Naive thymus-derived CD4-positive, alpha-beta T cell (primary cell): ENCODE measurements at regions of chr16 and their contacts with region 1.

Region 1: DNA sequence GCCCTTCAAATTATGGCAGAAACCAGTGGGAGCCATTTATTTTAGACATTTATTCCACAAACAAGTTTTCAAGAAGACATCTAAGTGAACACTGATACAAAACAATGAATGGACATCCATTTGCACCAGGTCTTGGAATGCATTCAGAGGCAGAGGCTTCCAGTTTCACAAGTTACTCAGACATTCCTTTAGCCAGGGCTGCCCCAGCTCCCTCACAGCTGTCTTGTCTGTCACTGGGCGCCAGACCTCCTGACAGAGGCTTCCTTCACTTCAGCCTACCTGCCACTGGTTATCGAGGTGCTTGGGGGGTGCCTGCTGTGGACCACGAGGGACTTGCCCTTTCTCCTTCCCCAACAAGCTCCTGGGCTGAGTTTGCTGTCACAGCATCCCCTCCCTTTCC is 19.2 kb downstream of the AQP8 start:
- DNase-seq: no peak
- ATAC-seq: no peak
- H3K4me3 ChIP-seq: no peak overlapping the region
- H3K4me3 Mint-ChIP-seq: no peak overlapping the region
- H3K27ac ChIP-seq: no peak overlapping the region
- H3K27ac Mint-ChIP-seq: no peak overlapping the region
- H3K4me1 ChIP-seq: no peaks in the 10 kb centered on the region
- H3K4me1 Mint-ChIP-seq: peaks cover 0 to 5% (median 0%) of the 10 kb centered on the region in 7 donors
- H3K27me3 ChIP-seq: no peaks in the 10 kb centered on the region
- H3K27me3 Mint-ChIP-seq: no peaks in the 10 kb centered on the region

Region 2: GRCh38 chr16:23826528-23827045 is 1409.4 kb before region 1 on chr16:
- CTCF ChIA-PET with region 1: no interaction called
- POLR2A ChIA-PET with region 1: no interaction called
- intact Hi-C with region 1: no loop called
- DNase-seq: peak in 7 of 9 donors; percentile 48 to 76 (median 62)
- ATAC-seq: peak; percentile 94
- H3K4me3 ChIP-seq: peak overlapping the region; percentile 8
- H3K4me3 Mint-ChIP-seq: peak overlapping the region; percentile 35 to 87 (median 69)
- H3K27ac ChIP-seq: peak overlapping the region; percentile 31
- H3K27ac Mint-ChIP-seq: peak overlapping the region; percentile 54 to 94 (median 88)
- H3K4me1 ChIP-seq: peaks cover 22 to 23% of the 10 kb centered on the region in 2 donors
- H3K4me1 Mint-ChIP-seq: peaks cover 31 to 44% (median 35%) of the 10 kb centered on the region in 7 donors
- H3K27me3 ChIP-seq: no peaks in the 10 kb centered on the region
- H3K27me3 Mint-ChIP-seq: peaks cover 0 to 3% (median 0%) of the 10 kb centered on the region in 5 donors

Region 3: GRCh38 chr16:25257504-25257955 is 21.5 kb after region 1 on chr16 and contains the start of gene ZKSCAN2:
- CTCF ChIA-PET with region 1: no interaction called
- POLR2A ChIA-PET with region 1: interaction called, 3 read pairs
- intact Hi-C with region 1: loop called (anchors 1 kb)
- DNase-seq: peak; percentile 66 to 90 (median 76)
- ATAC-seq: peak; percentile 89
- H3K4me3 ChIP-seq: peak within 1 kb of the TSS; percentile 90
- H3K4me3 Mint-ChIP-seq: peak within 1 kb of the TSS; percentile 90 to 98 (median 96)
- H3K27ac ChIP-seq: peak within 1 kb of the TSS; percentile 93
- H3K27ac Mint-ChIP-seq: peak within 1 kb of the TSS; percentile 95 to 98 (median 96)
- H3K4me1 ChIP-seq: peaks cover 16 to 39% of the 10 kb centered on the region in 2 donors
- H3K4me1 Mint-ChIP-seq: peaks cover 48 to 74% (median 66%) of the 10 kb centered on the region in 7 donors
- H3K27me3 ChIP-seq: no peaks in the 10 kb centered on the region
- H3K27me3 Mint-ChIP-seq: no peaks in the 10 kb centered on the region
- total RNA-seq, gene ZKSCAN2: 4.7 to 7.0 (median 5.2) TPM

Region 4: DNA sequence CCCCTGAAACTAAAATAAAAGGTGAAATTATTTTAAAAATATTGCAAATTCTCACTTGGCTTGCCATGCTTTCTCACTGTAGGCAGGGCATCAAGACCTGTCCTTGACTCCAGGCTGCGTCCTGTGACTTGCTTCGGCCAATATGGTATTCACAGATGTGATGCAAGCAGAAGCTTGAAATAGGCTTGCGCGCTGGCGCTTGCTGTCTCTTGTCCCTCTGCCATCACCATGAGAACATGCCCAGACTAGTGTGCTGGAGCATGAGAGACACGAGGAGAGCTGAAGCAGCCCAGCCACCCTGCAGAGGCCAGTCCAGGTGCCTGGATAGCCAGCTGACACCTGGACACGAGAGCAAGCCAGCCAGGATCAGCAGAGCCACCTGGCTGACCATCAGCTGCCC is 43.5 kb after region 1 on chr16:
- CTCF ChIA-PET with region 1: interaction called, 3 read pairs
- POLR2A ChIA-PET with region 1: no interaction called
- intact Hi-C with region 1: loop called in 1 of 2 experiments (anchors 1 kb)
- DNase-seq: no peak
- ATAC-seq: no peak
- H3K4me3 ChIP-seq: no peak overlapping the region
- H3K4me3 Mint-ChIP-seq: no peak overlapping the region
- H3K27ac ChIP-seq: no peak overlapping the region
- H3K27ac Mint-ChIP-seq: no peak overlapping the region
- H3K4me1 ChIP-seq: no peaks in the 10 kb centered on the region
- H3K4me1 Mint-ChIP-seq: peaks cover 0 to 9% (median 3%) of the 10 kb centered on the region in 7 donors
- H3K27me3 ChIP-seq: no peaks in the 10 kb centered on the region
- H3K27me3 Mint-ChIP-seq: peaks cover 0 to 8% (median 0%) of the 10 kb centered on the region in 5 donors

Region 5: GRCh38 chr16:25707982-25708583 is 472.1 kb after region 1 on chr16:
- CTCF ChIA-PET with region 1: no interaction called
- POLR2A ChIA-PET with region 1: no interaction called
- intact Hi-C with region 1: loop called in 1 of 2 experiments (anchors 5 kb)
- DNase-seq: no peak
- ATAC-seq: no peak
- H3K4me3 ChIP-seq: no peak overlapping the region
- H3K4me3 Mint-ChIP-seq: no peak overlapping the region
- H3K27ac ChIP-seq: no peak overlapping the region
- H3K27ac Mint-ChIP-seq: no peak overlapping the region
- H3K4me1 ChIP-seq: no peaks in the 10 kb centered on the region
- H3K4me1 Mint-ChIP-seq: no peaks in the 10 kb centered on the region
- H3K27me3 ChIP-seq: no peaks in the 10 kb centered on the region
- H3K27me3 Mint-ChIP-seq: peaks cover 12 to 35% (median 18%) of the 10 kb centered on the region in 5 donors

Region 6: GRCh38 chr16:27109666-27110523 is 1873.9 kb after region 1 on chr16:
- CTCF ChIA-PET with region 1: no interaction called
- POLR2A ChIA-PET with region 1: no interaction called
- intact Hi-C with region 1: loop called in 1 of 2 experiments (anchors 5 kb)
- DNase-seq: peak; percentile 55 to 93 (median 80)
- ATAC-seq: peak; percentile 94
- H3K4me3 ChIP-seq: peak overlapping the region; percentile 54
- H3K4me3 Mint-ChIP-seq: peak overlapping the region; percentile 54 to 84 (median 70)
- H3K27ac ChIP-seq: no peak overlapping the region
- H3K27ac Mint-ChIP-seq: peak overlapping the region in 3 of 9 donors; percentile 12 to 25 (median 20)
- H3K4me1 ChIP-seq: peaks cover 6 to 9% of the 10 kb centered on the region in 2 donors
- H3K4me1 Mint-ChIP-seq: peaks cover 0 to 13% (median 6%) of the 10 kb centered on the region in 7 donors
- H3K27me3 ChIP-seq: no peaks in the 10 kb centered on the region
- H3K27me3 Mint-ChIP-seq: peaks cover 0 to 5% (median 0%) of the 10 kb centered on the region in 5 donors